ENCODE measurements at regions of chr11 and their contacts with region 1.

Region 1: DNA sequence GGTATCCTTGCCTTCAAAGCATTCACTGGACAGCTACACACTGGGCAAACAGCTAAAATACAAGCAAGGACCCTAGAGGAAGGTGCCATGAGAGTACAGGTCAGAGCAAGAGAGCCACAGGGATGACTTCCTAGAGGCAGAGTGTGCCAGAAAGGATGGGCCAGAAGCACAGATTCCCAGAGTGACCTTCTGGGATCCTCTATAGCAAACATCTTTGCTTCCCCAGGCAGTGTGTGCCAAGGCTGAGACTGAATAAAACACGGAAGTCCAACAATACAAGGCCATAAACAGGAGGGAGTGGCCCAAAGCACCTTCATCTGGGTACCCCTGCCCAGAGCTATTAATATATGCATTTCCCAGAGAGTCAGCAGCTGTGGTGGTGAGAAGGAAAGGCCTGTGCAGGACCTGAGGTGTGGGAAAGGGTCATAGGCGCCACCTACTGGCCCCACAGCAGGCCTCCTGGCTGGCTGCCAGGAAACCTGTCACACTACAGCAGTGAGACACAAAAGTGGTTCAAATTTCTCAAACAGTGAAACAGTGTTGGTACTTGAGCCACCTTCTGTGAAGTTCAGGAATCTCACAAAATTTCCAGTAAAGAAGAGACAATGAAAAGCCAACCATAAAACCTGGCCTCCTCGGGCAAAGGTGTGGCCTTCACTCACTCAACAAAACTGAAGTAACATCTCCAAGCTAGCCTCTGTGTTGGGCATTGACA is 20.3 kb downstream of the CLPB start:
- DNase-seq: peak; percentile 85
- H3K4me3 Mint-ChIP-seq: no peak overlapping the region
- H3K27ac Mint-ChIP-seq: no peak overlapping the region
- H3K4me1 Mint-ChIP-seq: peaks cover 5% of the 10 kb centered on the region
- H3K27me3 Mint-ChIP-seq: no peaks in the 10 kb centered on the region
- CTCF ChIP-seq: peak; percentile 82

Region 2: DNA sequence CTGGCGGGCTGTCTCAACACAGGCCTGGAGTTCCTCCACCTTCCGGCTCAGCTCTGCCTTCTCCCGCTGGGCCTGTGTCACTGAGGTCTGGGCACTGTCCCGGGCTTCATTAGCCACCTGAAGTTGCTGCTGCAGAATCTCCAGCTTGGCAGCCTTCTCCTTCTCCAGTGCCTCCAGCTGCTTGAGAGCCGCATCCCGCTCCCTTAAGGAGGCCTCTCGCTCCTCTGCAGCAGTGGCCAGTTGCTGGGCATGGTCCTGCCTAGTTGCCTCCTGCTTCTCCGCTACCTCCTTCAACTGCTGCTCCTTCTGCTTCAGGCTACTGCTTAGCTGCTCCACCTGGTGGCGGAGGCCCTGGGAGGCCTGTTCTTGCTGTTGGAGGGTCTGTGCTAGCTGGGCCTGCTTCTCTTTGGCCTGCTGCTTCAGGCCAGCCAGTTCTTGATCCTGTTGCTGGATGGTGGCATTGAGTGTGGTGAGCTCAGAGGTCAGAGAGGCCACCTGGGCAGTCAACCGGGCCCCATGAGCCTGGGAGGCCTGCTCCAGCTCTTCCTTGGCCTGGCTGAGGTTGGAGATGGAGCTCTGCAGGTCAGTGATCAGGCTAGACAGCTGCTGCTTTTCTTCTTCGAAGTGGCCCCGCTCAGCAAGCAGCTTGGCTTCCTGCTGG is 398.4 kb before region 1 on chr11:
- CTCF ChIA-PET with region 1: interaction called, 15 read pairs
- POLR2A ChIA-PET with region 1: no interaction called
- intact Hi-C with region 1: no loop called
- DNase-seq: no peak
- H3K4me3 Mint-ChIP-seq: no peak overlapping the region
- H3K27ac Mint-ChIP-seq: no peak overlapping the region
- H3K4me1 Mint-ChIP-seq: peaks cover 34% of the 10 kb centered on the region
- H3K27me3 Mint-ChIP-seq: no peaks in the 10 kb centered on the region
- CTCF ChIP-seq: peak; percentile 20

Region 3: GRCh38 chr11:72244361-72245262 is 169.5 kb before region 1 on chr11:
- CTCF ChIA-PET with region 1: interaction called, 5 read pairs
- POLR2A ChIA-PET with region 1: no interaction called
- intact Hi-C with region 1: loop called (anchors 5 kb)
- DNase-seq: no peak
- H3K4me3 Mint-ChIP-seq: no peak overlapping the region
- H3K27ac Mint-ChIP-seq: no peak overlapping the region
- H3K4me1 Mint-ChIP-seq: no peaks in the 10 kb centered on the region
- H3K27me3 Mint-ChIP-seq: no peaks in the 10 kb centered on the region
- CTCF ChIP-seq: no peak

Region 4: DNA sequence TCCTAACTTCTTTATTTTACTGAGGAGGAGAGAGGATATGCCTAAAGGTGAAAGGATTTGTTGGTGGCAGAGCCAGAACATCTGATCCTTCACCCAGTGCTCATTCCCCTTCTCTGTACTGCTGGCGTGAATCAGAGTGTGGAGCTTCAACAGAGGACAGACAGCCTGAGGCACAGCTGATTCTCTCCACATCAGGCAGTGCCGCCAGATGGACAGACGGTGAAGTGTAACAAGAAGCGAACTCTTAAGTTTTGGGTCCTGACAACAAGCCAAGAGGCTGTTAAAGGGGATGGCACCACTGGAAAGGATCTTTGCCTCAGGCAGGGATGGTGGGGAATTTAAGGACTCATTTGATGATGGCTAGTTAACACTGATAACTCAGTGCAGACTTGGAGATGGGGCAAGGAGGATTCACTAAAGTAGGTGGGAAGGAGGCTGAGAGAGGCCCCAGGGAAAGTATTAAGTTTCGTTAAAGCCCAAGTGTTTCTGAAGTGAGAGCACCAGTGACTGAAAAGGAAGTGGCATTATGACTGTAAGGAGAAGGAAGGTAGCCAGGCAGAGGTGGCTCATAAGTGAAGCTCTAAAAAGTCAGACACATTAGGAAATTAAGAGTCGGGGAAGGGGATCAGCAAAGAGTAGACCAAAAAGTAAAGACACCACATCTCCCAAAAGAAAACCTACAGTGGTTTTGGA is 61.1 kb before region 1 on chr11:
- CTCF ChIA-PET with region 1: interaction called, 14 read pairs
- POLR2A ChIA-PET with region 1: no interaction called
- intact Hi-C with region 1: loop called (anchors 1 kb)
- DNase-seq: no peak
- H3K4me3 Mint-ChIP-seq: no peak overlapping the region
- H3K27ac Mint-ChIP-seq: no peak overlapping the region
- H3K4me1 Mint-ChIP-seq: peaks cover 9% of the 10 kb centered on the region
- H3K27me3 Mint-ChIP-seq: no peaks in the 10 kb centered on the region
- CTCF ChIP-seq: no peak

Region 5: GRCh38 chr11:72425053-72425980 is 11.2 kb after region 1 on chr11:
- CTCF ChIA-PET with region 1: interaction called, 50 read pairs
- POLR2A ChIA-PET with region 1: interaction called, 17 read pairs
- intact Hi-C with region 1: no loop called
- DNase-seq: no peak
- H3K4me3 Mint-ChIP-seq: no peak overlapping the region
- H3K27ac Mint-ChIP-seq: no peak overlapping the region
- H3K4me1 Mint-ChIP-seq: peaks cover 21% of the 10 kb centered on the region
- H3K27me3 Mint-ChIP-seq: no peaks in the 10 kb centered on the region
- CTCF ChIP-seq: no peak

Region 6: DNA sequence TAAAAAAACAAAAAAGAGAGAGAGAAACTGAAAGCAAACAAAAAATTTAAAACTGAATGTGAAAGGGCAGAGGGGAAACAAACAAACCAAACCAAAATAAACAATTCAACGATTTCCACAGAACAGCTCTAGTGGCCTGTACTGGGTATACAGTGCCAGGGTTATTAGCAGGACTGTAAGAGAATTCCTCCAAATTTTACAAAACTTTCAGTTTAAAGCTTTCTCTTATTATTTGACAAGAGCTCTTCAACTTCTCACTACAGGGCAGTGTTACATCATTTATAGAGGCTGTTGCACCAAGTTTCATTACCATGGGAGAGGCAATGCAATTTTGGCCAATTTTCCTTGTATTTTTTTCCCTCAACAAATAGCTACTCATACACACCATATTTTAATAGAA is 64.6 kb after region 1 on chr11:
- CTCF ChIA-PET with region 1: no interaction called
- POLR2A ChIA-PET with region 1: no interaction called
- intact Hi-C with region 1: no loop called
- DNase-seq: no peak
- H3K4me3 Mint-ChIP-seq: no peak overlapping the region
- H3K27ac Mint-ChIP-seq: no peak overlapping the region
- H3K4me1 Mint-ChIP-seq: peaks cover 14% of the 10 kb centered on the region
- H3K27me3 Mint-ChIP-seq: no peaks in the 10 kb centered on the region
- CTCF ChIP-seq: no peak